ENCODE measurements at regions of chr5 and their contacts with region 1.

Region 1: GRCh38 chr5:31809050-31809870 is 170.3 kb downstream of the PDZD2 start:
- DNase-seq: peak; percentile 80
- ATAC-seq: peak; percentile 94

Region 2: DNA sequence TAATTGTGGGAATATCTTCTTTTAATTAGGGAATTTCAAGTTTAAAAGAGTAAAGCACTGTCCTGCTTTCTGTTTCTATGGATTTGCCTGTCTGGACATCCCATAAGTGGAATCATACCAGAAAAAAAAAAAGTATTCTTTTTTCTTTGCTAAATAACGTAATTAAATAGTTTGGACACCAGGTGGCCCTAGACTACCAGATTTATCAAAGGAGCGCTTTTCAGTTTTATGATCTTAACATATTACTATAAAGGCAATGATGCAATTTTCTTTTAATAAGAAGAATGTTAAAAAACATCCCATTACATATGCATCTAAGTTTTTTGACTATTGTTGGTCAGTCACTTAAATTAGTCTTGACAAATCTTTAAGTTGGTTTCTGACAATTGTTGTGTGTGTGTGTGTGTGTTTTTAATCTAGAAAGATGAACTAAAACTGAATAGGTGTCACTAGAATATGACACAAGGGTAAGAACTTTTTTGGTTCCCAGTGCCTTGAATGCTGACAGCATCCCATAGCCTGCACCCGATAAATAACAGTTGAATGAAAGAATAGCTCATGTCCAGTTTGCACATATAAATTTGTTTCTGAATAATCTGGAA is 227.7 kb before region 1 on chr5:
- intact Hi-C with region 1: loop called (anchors 2 kb)
- DNase-seq: no peak
- ATAC-seq: peak; percentile 61

Region 3: GRCh38 chr5:31638748-31639418 is 170.4 kb before region 1 on chr5 and contains the start of gene PDZD2:
- intact Hi-C with region 1: loop called (anchors 5 kb)
- DNase-seq: peak; percentile 89
- ATAC-seq: peak; percentile 77
- total RNA-seq, gene PDZD2: 81.5 TPM

Region 4: DNA sequence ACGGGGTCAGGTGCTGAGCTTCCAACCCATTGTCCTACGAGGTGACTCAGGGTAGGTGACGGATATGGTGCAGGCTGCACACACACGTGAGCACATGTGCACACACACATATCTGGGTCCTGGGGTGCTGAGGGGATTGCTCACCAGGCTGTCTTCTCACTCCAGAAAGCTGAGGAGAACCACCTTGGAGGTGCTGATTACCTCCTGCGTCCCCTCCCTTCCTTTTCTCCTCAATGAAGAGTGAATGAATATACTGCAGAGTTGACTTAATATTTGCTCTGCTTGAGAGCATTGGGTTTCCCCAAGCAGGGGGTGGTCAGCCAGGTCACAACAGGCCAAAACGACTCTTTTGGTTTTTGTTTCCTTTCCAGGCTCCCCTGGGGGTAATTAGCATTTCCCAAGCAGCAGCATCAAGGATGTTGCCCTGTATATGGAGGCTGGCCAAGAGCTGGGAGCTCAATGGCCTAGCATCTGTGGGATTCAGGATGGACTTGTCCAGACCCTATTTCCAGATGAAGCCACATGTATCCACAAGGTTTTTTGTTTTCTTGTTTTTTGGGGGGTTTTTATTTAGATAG is 120.7 kb before region 1 on chr5:
- intact Hi-C with region 1: loop called (anchors 5 kb)
- DNase-seq: no peak
- ATAC-seq: no peak

Measured in Right ventricle myocardium superior (tissue), 1 donor.